PC-9 (cell line): ENCODE measurements at regions of chr1 and their contacts with region 1.

Region 1: DNA sequence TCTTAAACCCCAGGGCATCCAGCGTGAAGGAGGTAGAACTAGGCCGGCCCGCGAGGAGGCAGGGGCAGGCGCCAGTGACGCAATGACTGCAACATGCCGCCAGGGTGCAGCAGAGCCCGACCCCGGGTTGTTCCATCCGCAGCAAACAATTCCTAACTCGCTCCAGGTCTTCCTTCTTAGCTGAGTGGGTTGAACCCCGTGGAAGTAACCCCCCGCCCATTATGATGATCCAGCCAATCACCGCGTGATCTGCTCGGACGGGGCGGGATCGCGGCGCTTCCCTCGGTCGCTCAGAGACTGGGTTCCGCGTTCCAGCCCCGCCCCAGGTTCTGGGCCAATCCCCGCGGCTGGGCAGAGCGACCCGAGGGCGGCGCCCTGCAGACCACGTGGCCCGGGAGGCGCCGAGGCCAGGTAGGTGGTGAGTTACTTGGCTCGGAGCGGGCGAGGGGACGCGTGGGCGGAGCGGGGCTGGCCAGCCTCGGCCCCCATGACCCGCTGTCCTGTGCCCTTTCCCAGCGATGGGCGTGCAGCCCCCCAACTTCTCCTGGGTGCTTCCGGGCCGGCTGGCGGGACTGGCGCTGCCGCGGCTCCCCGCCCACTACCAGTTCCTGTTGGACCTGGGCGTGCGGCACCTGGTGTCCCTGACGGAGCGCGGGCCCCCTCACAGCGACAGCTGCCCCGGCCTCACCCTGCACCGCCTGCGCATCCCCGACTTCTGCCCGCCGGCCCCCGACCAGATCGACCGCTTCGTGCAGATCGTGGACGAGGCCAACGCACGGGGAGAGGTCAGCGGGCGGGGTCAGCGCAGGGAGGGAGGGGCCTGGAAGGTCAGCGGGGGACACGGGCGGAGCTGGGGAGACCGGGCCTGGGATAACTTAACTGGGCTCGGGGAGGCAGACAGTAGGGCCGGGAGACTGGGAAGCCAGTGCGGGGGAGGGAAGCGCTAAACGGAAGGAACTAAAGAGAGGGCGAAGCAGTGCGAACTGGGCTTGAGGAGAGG is at the start of gene DUSP23:
- DNase-seq: peak; percentile 93 to 98
- H3K4me3 ChIP-seq: peak within 1 kb of the TSS; percentile 77
- H3K27ac ChIP-seq: no peak within 1 kb of the TSS; the same call in 1 of the 2 replicates
- H3K4me1 ChIP-seq: peaks cover 4% of the 10 kb centered on the region; the same call in 1 of the 2 replicates
- H3K27me3 ChIP-seq: no peaks in the 10 kb centered on the region
- CTCF ChIP-seq: peak; percentile 82
- total RNA-seq, gene DUSP23: 33.1 and 50.4 TPM in 2 replicates

Region 2: GRCh38 chr1:159040206-159040605 is 740.7 kb before region 1 on chr1:
- CTCF ChIA-PET with region 1: no interaction called
- POLR2A ChIA-PET with region 1: no interaction called
- intact Hi-C with region 1: no loop called
- DNase-seq: no peak
- H3K4me3 ChIP-seq: no peak overlapping the region
- H3K27ac ChIP-seq: no peak overlapping the region
- H3K4me1 ChIP-seq: no peaks in the 10 kb centered on the region
- H3K27me3 ChIP-seq: no peaks in the 10 kb centered on the region
- CTCF ChIP-seq: no peak

Region 3: DNA sequence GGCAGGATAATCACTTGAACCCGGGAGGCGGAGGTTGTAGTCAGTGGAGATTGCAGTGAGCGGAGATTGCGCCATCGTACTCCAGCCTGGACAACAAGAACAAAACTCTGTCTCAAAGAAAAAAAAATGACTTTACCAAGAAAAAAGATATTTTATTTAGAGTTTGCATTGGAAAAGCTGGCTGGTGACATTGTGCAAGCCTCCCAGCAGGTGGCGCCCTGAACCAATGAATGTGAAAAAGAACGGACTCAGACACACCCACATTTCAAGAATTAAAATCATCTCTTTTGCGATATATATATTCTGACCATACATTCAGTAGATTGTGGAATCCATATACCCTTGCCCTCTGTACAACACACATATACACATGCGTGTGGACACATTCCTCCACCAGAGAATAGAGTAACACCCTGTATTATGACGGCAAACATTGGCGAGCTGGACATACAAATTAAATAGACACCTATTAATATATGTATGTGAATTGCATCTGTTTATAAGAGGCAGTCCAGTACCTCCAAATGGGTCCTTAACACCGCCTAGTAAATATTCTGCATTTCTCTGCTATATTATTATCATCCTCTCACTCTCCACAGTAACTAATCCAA is 648.5 kb before region 1 on chr1:
- CTCF ChIA-PET with region 1: no interaction called
- POLR2A ChIA-PET with region 1: no interaction called
- intact Hi-C with region 1: loop called (anchors 10 kb)
- DNase-seq: peak in 1 of 2 experiments; percentile 53
- H3K4me3 ChIP-seq: no peak overlapping the region
- H3K27ac ChIP-seq: no peak overlapping the region
- H3K4me1 ChIP-seq: no peaks in the 10 kb centered on the region
- H3K27me3 ChIP-seq: peaks cover 30% of the 10 kb centered on the region
- CTCF ChIP-seq: peak; percentile 87

Region 4: DNA sequence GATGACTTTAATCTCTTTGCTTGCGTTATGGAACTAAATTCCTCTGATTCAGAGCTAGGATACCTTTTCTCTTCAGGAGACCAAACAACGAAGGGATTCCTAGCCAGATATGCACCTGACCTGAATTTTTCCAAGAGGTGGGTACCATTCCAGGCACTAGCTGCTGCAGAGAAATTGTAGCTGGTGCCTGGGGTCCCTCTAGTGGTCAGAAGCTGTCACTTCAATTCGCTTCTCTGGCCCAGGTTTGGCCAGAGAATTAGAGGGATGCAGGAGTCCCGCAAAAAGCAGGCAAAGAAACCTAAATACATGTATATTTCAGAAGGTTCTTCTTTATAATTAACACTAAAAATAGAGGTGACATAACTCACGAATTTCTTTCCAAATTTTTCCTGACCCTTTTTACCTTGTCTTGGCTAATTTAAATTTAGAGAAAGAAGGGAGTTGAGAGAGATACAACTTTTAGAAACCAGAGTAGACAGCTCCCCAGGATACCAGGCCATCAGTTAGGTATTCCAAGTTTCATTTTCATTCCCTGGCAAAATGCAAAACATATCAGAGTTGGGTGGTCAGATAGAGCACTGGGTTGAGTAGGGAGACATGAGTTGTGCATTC is 566.6 kb before region 1 on chr1:
- CTCF ChIA-PET with region 1: no interaction called
- POLR2A ChIA-PET with region 1: no interaction called
- intact Hi-C with region 1: loop called (anchors 10 kb)
- DNase-seq: peak in 1 of 2 experiments; percentile 31
- H3K4me3 ChIP-seq: no peak overlapping the region
- H3K27ac ChIP-seq: no peak overlapping the region
- H3K4me1 ChIP-seq: no peaks in the 10 kb centered on the region
- H3K27me3 ChIP-seq: peaks cover 47% of the 10 kb centered on the region
- CTCF ChIP-seq: peak; percentile 92

Region 5: GRCh38 chr1:159854693-159855192 is 73.9 kb after region 1 on chr1:
- CTCF ChIA-PET with region 1: no interaction called
- POLR2A ChIA-PET with region 1: no interaction called
- intact Hi-C with region 1: loop called (anchors 2 kb)
- DNase-seq: peak; percentile 70 to 88
- H3K4me3 ChIP-seq: peak overlapping the region; percentile 85
- H3K27ac ChIP-seq: peak overlapping the region; percentile 66
- H3K4me1 ChIP-seq: peaks cover 17% of the 10 kb centered on the region
- H3K27me3 ChIP-seq: no peaks in the 10 kb centered on the region
- CTCF ChIP-seq: no peak

Region 6: GRCh38 chr1:159924981-159925712 is 144.3 kb after region 1 on chr1 and contains the start of gene TAGLN2:
- CTCF ChIA-PET with region 1: no interaction called
- POLR2A ChIA-PET with region 1: no interaction called
- intact Hi-C with region 1: loop called (anchors 1 kb)
- DNase-seq: peak; percentile 87 to 92
- H3K4me3 ChIP-seq: peak within 1 kb of the TSS; percentile 93
- H3K27ac ChIP-seq: peak within 1 kb of the TSS; percentile 93
- H3K4me1 ChIP-seq: peaks cover 48% of the 10 kb centered on the region
- H3K27me3 ChIP-seq: no peaks in the 10 kb centered on the region
- CTCF ChIP-seq: no peak
- total RNA-seq, gene TAGLN2: 473 and 481 TPM in 2 replicates

Region 7: GRCh38 chr1:160006312-160006940 is 225.5 kb after region 1 on chr1:
- CTCF ChIA-PET with region 1: interaction called, 5 read pairs
- POLR2A ChIA-PET with region 1: no interaction called
- intact Hi-C with region 1: loop called (anchors 1 kb)
- DNase-seq: peak; percentile 60 to 76
- H3K4me3 ChIP-seq: no peak overlapping the region
- H3K27ac ChIP-seq: no peak overlapping the region
- H3K4me1 ChIP-seq: no peaks in the 10 kb centered on the region; the same call in 1 of the 2 replicates
- H3K27me3 ChIP-seq: no peaks in the 10 kb centered on the region
- CTCF ChIP-seq: peak; percentile 95